ENCODE measurements at regions of chr16 and their contacts with region 1.

Region 1: DNA sequence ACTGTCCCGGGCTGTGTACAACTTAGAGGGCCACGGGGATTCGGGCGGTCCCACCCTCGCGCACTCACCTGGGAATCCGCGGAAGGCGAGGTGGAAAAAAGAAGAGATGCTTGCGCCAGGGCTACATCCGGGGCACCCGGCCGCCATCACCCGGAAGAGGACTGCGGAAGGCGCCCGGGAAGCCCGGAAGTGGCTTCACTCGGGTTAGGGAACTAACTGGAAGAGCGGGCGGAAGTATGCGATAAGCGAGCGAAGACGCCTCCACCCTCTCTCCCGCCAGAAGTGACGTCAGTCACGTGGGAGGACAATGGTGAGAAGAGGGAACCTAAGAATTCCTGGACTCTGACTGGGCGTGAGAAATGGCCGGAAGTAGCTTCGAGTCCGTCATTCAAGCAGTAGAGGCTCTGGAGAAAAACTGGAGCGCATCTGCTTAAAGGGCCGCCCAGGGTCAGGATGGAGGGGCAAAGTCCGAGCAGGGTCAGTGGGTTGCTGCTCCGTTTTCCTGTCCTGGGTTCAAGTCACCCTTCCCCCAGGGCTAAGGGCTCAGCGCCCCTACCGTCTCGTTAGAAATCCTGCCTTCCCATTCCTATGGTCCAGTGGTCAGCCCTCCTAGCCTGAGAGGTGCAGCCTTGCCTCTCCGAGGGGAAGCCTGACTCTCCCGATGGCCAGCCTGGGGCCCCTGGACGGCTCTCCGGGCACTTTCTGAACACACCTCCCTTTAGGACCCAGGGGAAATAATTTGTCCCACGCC is at the start of gene CD2BP2:
- DNase-seq: peak; percentile 98
- H3K4me3 ChIP-seq: peak within 1 kb of the TSS; percentile 98
- H3K27ac ChIP-seq: peak within 1 kb of the TSS; percentile 76
- H3K4me1 ChIP-seq: peaks cover 62% of the 10 kb centered on the region
- CTCF ChIP-seq: 0 out of 2 replicates have a peak, but pooled peaks have one; percentile 12
- total RNA-seq, gene CD2BP2: 69.2 and 94.7 TPM in 2 replicates

Region 2: DNA sequence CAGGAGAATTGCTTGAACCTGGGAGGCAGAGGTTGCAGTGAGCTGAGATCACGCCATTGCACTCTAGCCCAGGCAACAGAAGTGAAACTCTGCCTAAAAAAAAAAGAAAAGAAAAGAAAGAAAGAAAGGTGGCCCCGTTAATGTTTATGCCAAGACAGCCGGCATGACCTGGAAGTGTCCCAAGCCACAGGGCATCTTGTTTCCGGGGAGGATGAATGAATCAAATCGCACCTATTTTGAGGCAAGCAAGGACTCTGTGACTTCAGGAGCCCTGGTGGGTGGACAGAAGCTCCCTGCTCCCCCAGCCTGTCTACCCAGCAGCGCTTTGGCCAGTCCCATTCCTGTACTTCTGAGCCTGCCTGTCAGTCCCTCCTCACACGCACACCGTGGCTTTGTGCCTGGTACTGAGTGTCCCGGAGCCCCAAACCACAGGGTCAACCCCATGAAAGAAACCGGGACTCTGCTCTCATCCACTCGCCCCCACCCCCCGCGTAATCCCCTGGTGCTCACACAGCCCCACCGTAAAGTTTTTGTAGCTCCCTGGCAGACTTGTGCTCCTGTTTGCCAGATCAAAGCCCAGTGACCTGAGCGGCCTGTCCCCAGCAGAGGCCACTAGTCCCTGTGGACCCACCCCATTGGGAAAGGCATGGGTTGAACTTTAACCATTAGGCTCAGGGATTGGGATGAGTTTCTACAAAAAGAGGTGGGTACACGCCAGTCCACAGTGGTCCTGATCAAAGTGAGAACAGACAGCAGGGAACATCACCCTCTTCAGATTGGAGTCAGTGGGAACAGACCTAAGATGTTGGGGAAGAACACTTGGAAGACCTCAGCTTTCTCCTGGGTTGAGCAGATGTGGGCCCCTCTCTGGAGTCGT is 19.5 kb before region 1 on chr16:
- CTCF ChIA-PET with region 1: no interaction called
- POLR2A ChIA-PET with region 1: interaction called, 18 read pairs
- intact Hi-C with region 1: no loop called
- DNase-seq: no peak
- H3K4me3 ChIP-seq: peak overlapping the region; percentile 76
- H3K27ac ChIP-seq: peak overlapping the region; percentile 78
- H3K4me1 ChIP-seq: peaks cover 18% of the 10 kb centered on the region
- CTCF ChIP-seq: no peak

Measured in OCI-LY7 (cell line).